ENCODE measurements at regions of chr1 and their contacts with region 1.

Region 1: DNA sequence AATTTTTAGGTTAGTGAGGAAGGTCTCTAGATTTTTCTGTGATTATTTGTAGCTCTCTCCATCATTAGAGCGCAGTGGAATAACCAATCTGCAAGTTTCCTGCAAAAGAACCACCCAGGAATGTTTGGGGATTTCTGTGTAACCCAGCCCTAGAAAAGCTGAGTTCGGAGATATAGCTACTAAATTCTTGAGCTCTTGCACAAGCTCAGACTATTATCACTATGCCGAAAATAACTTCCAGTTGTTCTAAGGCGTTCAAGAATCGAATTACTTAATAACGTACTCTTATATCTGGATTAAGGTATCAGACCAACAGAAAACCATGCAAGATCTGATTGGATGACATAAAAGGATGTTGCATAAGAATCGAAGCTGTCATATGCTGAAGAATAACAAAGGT is 7.6 kb upstream of the LAMC2 start:
- ATAC-seq: no peak
- H3K4me3 ChIP-seq: no peak overlapping the region
- H3K27ac ChIP-seq: no peak overlapping the region
- H3K4me1 ChIP-seq: peaks cover 2 to 11% of the 10 kb centered on the region in 2 donors

Region 2: GRCh38 chr1:183110326-183110865 is 68.1 kb before region 1 on chr1:
- in situ Hi-C with region 1: loop called in 1 of 9 experiments (anchors 10 kb)
- ATAC-seq: no peak
- H3K4me3 ChIP-seq: no peak overlapping the region
- H3K27ac ChIP-seq: no peak overlapping the region
- H3K4me1 ChIP-seq: no peaks in the 10 kb centered on the region

Region 3: DNA sequence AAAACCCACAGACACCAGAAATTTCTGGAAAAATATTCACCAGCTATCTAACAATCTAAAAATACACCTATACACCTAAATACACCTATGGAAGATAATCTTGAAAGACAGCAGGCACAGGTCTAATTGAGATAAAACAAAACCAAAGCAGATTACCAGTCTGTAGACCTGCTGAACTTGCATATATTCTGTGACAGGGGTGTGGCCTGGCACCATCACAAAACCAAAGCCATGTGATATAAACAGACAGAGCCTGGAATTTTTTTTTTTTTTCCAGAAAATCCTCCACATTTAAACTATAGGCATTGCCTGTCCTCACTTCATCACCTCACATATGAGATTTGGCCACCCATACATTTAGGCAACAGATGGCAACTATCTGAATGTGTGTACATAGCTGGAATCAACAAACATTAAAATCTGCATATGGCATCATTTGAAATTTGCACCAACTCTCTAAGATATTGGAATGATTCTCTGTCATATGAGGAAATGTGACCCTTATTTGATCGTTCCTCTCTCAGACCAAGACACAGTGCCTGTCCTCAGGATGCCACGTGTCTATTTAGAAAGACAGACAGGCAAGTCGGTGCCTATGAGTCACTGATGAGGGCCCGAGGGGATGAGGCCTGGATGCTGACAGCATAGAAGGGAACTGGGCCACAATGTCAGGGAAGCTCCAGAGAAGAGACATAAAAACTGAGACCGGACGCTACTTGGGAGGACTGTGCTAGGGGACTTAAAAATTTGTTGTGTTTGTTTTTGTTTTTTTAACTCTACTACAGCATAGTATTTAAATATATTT is 207.1 kb after region 1 on chr1:
- in situ Hi-C with region 1: no loop called
- ATAC-seq: peak in 3 of 8 experiments; percentile 71 to 95 (median 77)
- H3K4me3 ChIP-seq: no peak overlapping the region
- H3K27ac ChIP-seq: no peak overlapping the region
- H3K4me1 ChIP-seq: peaks cover 5 to 10% of the 10 kb centered on the region in 2 donors

Region 4: GRCh38 chr1:183604038-183604808 is 425.7 kb after region 1 on chr1:
- in situ Hi-C with region 1: no loop called
- ATAC-seq: peak in 3 of 8 experiments; percentile 52 to 86 (median 74)
- H3K4me3 ChIP-seq: no peak overlapping the region
- H3K27ac ChIP-seq: no peak overlapping the region
- H3K4me1 ChIP-seq: no peaks in the 10 kb centered on the region

Region 5: DNA sequence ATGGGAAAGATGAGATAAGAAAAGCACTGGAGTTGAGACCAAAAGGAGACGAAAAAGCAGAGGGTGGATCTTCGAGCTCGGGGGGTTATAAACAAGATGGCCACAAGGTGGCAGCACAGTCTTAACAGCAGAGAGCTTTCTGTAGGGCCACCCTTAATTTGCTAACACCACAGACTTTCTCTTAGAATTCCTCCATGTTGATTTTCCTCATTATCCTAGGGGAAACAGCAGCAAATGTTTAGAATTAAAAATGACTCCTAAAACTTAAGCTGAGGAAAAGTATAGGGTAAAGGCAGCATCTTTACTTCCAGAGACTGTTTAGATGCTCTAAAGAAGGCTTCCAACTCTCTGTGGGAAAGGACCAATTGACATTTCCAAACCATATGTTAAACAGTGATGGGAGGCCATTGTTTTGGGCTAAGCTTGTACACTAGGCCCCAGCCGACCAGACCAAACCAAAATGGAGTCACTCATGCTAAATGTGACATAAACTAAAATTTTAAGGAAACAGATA is 477.1 kb after region 1 on chr1:
- in situ Hi-C with region 1: no loop called
- ATAC-seq: peak; percentile 55 to 93 (median 84)
- H3K4me3 ChIP-seq: no peak overlapping the region
- H3K27ac ChIP-seq: no peak overlapping the region
- H3K4me1 ChIP-seq: no peaks in the 10 kb centered on the region

Region 6: GRCh38 chr1:184127520-184127919 is 949.0 kb after region 1 on chr1:
- in situ Hi-C with region 1: no loop called
- ATAC-seq: no peak
- H3K4me3 ChIP-seq: no peak overlapping the region
- H3K27ac ChIP-seq: no peak overlapping the region
- H3K4me1 ChIP-seq: peaks cover 0 to 9% of the 10 kb centered on the region in 2 donors

Measured in motor neuron (in vitro differentiated cells).